Naive thymus-derived CD8-positive, alpha-beta T cell (primary cell): ENCODE measurements at regions of chr1 and their contacts with region 1.

Region 1: DNA sequence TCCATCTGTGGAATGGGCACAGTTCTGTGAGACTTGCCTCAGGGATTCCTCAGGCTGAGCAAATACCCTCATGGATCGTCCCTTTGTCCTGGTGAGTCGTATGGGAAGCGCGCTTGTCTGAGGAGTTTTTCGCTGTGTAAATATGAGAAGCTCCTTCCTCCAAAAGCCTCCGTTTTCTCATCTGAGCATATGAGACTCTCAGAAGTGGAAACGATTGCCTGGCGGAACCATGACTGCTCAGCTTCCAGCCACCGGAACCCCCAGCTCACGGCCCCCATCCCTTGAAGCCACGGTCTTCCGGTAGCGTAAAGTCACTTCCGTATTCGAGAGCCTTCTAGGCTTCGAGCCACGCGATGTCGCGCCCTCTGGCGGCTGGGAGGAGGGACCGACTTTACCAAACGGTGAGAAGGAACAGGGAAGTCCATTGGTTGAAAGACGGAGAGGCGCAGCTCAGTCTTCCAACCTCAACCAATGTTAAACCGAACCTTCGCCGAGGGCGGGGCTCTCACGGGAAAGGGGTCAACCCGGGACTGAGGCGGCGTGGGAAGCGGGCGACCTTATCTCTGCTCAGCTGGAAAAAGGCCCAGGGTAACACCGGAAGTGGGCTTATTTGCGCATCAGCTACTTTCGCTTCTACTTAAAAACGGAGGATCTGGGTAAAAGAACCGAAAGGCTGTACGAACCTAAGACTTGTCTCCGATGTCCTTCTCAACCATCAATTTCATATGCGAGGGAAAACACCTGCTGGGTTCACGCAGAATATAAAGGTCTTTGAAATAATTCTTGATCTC is 46.2 kb downstream of the AZIN2 start:
- DNase-seq: peak; percentile 95 to 99 (median 98)
- ATAC-seq: peak; percentile 93 to 94
- H3K4me3 Mint-ChIP-seq: peak overlapping the region; percentile 87 to 97 (median 94)
- H3K27ac Mint-ChIP-seq: peak overlapping the region; percentile 92 to 97 (median 96)
- H3K4me1 Mint-ChIP-seq: peaks cover 22 to 55% (median 51%) of the 10 kb centered on the region in 4 donors
- H3K27me3 Mint-ChIP-seq: no peaks in the 10 kb centered on the region

Region 2: DNA sequence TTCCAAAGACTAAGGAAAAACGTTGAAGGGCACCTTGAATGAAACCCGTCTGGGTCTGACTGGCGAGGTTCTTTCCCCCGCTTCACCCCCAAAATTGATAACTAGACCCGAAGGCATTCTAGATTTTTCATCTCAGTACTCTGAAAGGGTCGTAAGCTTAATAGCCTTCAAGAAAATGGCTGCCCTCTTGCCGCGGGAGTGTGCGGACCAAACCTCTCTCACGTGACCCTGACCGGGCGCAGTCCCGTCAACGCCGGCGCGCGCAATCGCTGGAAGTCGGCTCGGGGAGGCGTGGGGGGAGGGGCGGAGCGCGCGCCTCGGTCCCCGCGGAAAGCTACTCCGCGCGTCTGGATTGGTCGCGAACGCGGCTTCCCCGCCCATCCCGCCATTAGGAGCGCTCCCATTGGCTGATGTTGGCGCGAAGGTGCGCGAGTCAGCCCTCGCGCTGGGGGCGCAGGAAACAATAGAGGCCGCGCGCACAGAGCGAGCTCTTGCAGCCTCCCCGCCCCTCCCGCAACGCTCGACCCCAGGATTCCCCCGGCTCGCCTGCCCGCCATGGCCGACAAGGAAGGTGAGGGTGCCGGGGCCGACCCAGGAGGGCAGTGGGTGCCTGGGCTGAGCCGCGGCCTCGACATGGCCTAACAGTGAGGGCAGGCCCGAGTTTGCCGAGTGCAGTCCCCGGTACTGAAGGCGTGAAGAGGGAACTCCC is 476.3 kb before region 1 on chr1 and contains the start of gene RBBP4:
- POLR2A ChIA-PET with region 1: interaction called, 11 read pairs
- DNase-seq: peak; percentile 97 to 99 (median 98)
- ATAC-seq: peak; percentile 83 to 85
- H3K4me3 Mint-ChIP-seq: peak within 1 kb of the TSS; percentile 81 to 99 (median 96)
- H3K27ac Mint-ChIP-seq: peak within 1 kb of the TSS; percentile 97 to 100 (median 100)
- H3K4me1 Mint-ChIP-seq: peaks cover 21 to 71% (median 63%) of the 10 kb centered on the region in 4 donors
- H3K27me3 Mint-ChIP-seq: no peaks in the 10 kb centered on the region
- polyA plus RNA-seq, gene RBBP4: 226 to 251 (median 231) TPM

Region 3: GRCh38 chr1:33080885-33081553 is 46.2 kb before region 1 on chr1 and contains the start of gene AZIN2:
- POLR2A ChIA-PET with region 1: interaction called, 16 read pairs
- DNase-seq: peak; percentile 95 to 99 (median 98)
- ATAC-seq: peak; percentile 96 to 99
- H3K4me3 Mint-ChIP-seq: peak within 1 kb of the TSS; percentile 73 to 90 (median 88)
- H3K27ac Mint-ChIP-seq: peak within 1 kb of the TSS; percentile 74 to 94 (median 90)
- H3K4me1 Mint-ChIP-seq: peaks cover 23 to 48% (median 33%) of the 10 kb centered on the region in 4 donors
- H3K27me3 Mint-ChIP-seq: peaks cover 0 to 3% (median 0%) of the 10 kb centered on the region in 5 donors
- polyA plus RNA-seq, gene AZIN2: 5.9 to 11.1 (median 7.8) TPM

Region 4: GRCh38 chr1:33088119-33088906 is 38.9 kb before region 1 on chr1:
- POLR2A ChIA-PET with region 1: interaction called, 11 read pairs
- DNase-seq: peak in 2 of 10 donors; percentile 16 to 31
- ATAC-seq: peak; percentile 83
- H3K4me3 Mint-ChIP-seq: peak overlapping the region in 9 of 10 donors; percentile 2 to 83 (median 65)
- H3K27ac Mint-ChIP-seq: peak overlapping the region; percentile 55 to 96 (median 80)
- H3K4me1 Mint-ChIP-seq: peaks cover 25 to 62% (median 27%) of the 10 kb centered on the region in 4 donors
- H3K27me3 Mint-ChIP-seq: no peaks in the 10 kb centered on the region

Region 5: DNA sequence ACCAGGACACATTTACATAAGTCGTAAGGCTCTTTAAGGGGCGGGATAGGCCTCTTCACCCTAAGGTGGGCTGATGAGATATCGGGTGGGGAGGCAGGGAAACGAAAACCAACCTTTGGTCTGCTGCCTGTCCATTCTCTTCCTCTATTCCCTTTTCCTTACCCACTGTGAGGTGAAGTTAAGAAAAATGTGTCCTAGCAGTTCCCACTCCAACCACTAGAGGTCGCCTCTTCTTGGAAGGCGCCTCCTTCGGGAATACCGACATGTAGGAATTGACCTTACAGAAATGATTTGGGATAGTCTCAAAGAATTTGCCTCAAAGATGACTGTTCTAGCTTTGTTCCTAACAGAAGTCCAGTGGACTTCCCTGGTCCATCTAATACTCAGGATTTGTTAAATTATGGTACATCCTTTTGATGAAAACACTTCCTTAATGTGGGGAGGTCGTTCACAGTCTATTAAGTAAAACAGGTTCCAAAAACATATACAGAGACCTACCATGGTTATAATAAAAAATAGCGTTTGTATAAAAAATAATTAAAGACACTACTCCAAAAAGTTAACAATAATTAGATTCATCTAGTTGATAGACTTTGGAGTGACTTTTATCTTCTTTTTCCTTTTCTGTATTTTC is 32.1 kb before region 1 on chr1:
- POLR2A ChIA-PET with region 1: interaction called, 25 read pairs
- DNase-seq: no peak
- ATAC-seq: no peak
- H3K4me3 Mint-ChIP-seq: no peak overlapping the region
- H3K27ac Mint-ChIP-seq: peak overlapping the region in 2 of 10 donors; percentile 15 to 66
- H3K4me1 Mint-ChIP-seq: peaks cover 22 to 59% (median 44%) of the 10 kb centered on the region in 4 donors
- H3K27me3 Mint-ChIP-seq: no peaks in the 10 kb centered on the region

Region 6: GRCh38 chr1:33181921-33182341 is 54.7 kb after region 1 on chr1 and contains the start of gene TRIM62:
- POLR2A ChIA-PET with region 1: interaction called, 34 read pairs
- DNase-seq: peak; percentile 58 to 86 (median 74)
- ATAC-seq: peak; percentile 64 to 67
- H3K4me3 Mint-ChIP-seq: peak within 1 kb of the TSS; percentile 83 to 93 (median 88)
- H3K27ac Mint-ChIP-seq: peak within 1 kb of the TSS in 8 of 10 donors; percentile 21 to 94 (median 84)
- H3K4me1 Mint-ChIP-seq: peaks cover 21 to 41% (median 26%) of the 10 kb centered on the region in 4 donors
- H3K27me3 Mint-ChIP-seq: peaks cover 0 to 10% (median 4%) of the 10 kb centered on the region in 5 donors
- polyA plus RNA-seq, gene TRIM62: 2.7 to 4.7 (median 4.0) TPM